ENCODE measurements at regions of chr5 and their contacts with region 1.

Region 1: GRCh38 chr5:66010476-66010875 is 84.1 kb downstream of the ERBIN start:
- DNase-seq: peak; percentile 12
- H3K4me3 ChIP-seq: no peak overlapping the region
- H3K27ac ChIP-seq: peak overlapping the region; percentile 20
- H3K4me1 ChIP-seq: peaks cover 26% of the 10 kb centered on the region
- CTCF ChIP-seq: no peak

Region 2: DNA sequence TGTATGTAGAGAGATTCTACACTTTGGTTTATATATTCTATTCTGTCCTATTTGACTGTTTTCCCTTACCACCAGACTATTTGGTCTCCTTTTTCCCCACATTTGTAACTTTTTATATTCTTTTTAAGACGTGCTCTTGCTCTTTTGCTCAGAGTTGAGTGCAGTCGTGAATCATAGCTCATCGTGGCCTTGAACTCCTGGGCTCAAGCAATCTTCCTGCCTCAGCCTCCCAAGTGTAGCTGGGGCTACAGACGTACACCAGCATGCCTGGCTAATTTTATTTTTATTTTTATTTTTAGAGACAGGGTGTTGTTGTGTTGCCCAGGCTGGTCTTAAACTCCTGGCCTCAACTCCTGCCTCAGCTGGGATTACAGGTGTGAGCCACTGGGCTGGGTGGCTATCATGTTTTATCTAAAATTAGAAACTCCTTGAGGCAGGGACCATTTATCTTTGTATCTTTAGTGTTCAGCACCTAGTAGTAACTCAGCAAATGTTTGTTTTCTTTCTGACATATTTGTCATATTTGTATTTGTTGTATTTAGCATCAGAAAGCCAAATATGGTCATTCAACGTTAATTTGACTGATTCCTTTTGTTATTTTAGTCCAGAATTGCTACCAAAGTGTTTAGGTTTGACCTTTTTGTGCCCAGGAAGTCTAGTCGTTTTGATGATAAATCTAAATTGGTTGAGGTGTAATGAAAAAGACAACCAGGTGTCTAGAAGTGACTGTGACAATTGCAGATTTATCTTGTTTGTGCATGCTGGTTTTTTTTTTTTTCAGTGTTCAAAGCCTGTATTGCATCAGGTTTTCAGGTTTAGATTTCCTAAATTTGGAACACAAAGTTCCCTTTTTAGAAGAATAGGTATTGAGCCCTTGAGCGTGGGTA is 39.8 kb before region 1 on chr5:
- CTCF ChIA-PET with region 1: no interaction called
- POLR2A ChIA-PET with region 1: interaction called, 3 read pairs
- intact Hi-C with region 1: loop called (anchors 5 kb)
- DNase-seq: peak; percentile 68
- H3K4me3 ChIP-seq: peak overlapping the region; percentile 43
- H3K27ac ChIP-seq: peak overlapping the region; percentile 82
- H3K4me1 ChIP-seq: peaks cover 47% of the 10 kb centered on the region
- CTCF ChIP-seq: no peak

Measured in OCI-LY7 (cell line).